ENCODE measurements at regions of chr7 and their contacts with region 1.

Region 1: DNA sequence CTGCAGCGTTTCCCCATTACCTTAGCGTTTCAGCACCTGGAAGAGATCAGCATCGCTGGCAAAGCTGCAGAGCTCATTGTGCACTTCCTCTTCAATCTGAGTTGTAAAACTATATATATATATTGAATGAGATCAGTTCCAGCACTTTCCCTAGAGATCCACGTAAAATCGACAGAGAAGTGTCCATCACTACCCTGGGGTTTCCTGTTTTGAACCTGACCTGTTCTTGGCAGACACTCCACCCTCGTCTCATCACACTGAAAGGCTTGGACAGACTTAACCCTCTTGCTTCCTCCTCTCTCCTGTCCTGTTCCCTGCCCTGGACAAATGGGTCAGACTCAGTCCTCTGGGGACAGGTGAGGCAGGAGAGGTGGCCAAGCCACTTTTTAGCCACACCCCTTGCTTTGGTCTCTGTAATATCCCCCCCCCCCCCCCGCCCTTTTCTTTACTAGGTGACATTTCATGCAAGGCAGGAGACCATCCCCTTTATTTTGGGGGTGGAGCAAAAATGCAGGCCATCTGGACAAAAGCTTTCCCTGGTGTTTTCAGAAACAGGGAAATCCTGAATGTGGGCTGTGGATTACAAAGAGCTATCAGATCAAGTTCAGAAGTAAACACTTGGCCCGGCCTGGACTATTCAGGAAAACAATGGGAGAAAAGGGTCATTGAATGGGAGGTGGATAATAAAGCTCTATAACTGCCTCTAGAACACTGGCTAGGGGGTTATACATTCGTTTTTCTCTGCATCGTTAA is 83.7 kb upstream of the KDM7A start:
- DNase-seq: no peak
- ATAC-seq: no peak
- H3K4me3 ChIP-seq: no peak overlapping the region
- H3K4me3 Mint-ChIP-seq: peak overlapping the region in 1 of 10 donors; percentile 7
- H3K27ac ChIP-seq: no peak overlapping the region
- H3K27ac Mint-ChIP-seq: peak overlapping the region in 5 of 9 donors; percentile 41 to 89 (median 74)
- H3K4me1 ChIP-seq: peaks cover 18 to 29% of the 10 kb centered on the region in 2 donors
- H3K4me1 Mint-ChIP-seq: peaks cover 29 to 58% (median 47%) of the 10 kb centered on the region in 7 donors
- H3K27me3 ChIP-seq: no peaks in the 10 kb centered on the region
- H3K27me3 Mint-ChIP-seq: peaks cover 0 to 4% (median 0%) of the 10 kb centered on the region in 5 donors

Region 2: GRCh38 chr7:140249036-140249806 is 11.3 kb before region 1 on chr7:
- CTCF ChIA-PET with region 1: interaction called, 4 read pairs
- POLR2A ChIA-PET with region 1: interaction called, 12 read pairs
- intact Hi-C with region 1: loop called in 1 of 2 experiments (anchors 1 kb)
- DNase-seq: no peak
- ATAC-seq: no peak
- H3K4me3 ChIP-seq: no peak overlapping the region
- H3K4me3 Mint-ChIP-seq: no peak overlapping the region
- H3K27ac ChIP-seq: no peak overlapping the region
- H3K27ac Mint-ChIP-seq: no peak overlapping the region
- H3K4me1 ChIP-seq: peaks cover 0 to 21% of the 10 kb centered on the region in 2 donors
- H3K4me1 Mint-ChIP-seq: peaks cover 0 to 34% (median 5%) of the 10 kb centered on the region in 7 donors
- H3K27me3 ChIP-seq: no peaks in the 10 kb centered on the region
- H3K27me3 Mint-ChIP-seq: no peaks in the 10 kb centered on the region